Caco-2 (cell line): ENCODE measurements at regions of chr12 and their contacts with region 1.

Region 1: DNA sequence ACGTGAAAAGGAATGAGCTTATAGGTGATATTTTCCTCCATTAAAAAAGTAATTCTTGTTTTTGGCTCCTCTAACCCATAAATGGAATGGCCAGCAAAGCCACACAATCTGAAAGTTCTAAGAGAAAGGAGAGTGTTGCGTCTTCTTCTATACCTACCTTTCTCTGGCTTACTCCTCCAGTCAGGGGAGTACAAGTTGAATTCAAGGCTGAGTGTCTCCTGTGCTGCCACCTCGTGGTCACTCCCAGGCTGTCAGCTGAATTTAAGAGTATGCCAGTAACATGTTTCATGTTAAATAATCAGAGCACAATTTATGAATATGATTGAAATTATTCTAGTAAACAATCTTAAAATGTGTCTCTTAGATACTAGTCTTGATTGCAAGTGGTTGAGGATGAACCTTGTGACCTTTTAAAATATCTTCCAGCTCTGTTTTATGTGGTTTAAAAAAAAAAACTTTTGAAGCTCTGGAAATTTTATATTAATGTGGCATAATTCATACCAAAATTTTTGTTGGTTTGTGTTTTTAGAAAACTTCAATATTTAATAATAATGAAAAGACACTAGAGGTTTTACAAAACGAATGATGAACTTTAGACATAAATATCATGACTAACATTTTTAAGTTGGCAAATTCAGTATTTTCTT is 31.7 kb downstream of the PTHLH start:
- DNase-seq: peak; percentile 83 to 87
- H3K4me3 ChIP-seq: no peak overlapping the region
- H3K4me3 Mint-ChIP-seq: no peak overlapping the region
- H3K27ac Mint-ChIP-seq: no peak overlapping the region
- H3K4me1 ChIP-seq: no peaks in the 10 kb centered on the region
- H3K4me1 Mint-ChIP-seq: no peaks in the 10 kb centered on the region
- H3K27me3 ChIP-seq: no peaks in the 10 kb centered on the region
- H3K27me3 Mint-ChIP-seq: peaks cover 4% of the 10 kb centered on the region
- CTCF ChIP-seq: peak; percentile 93 to 95

Region 2: GRCh38 chr12:27779920-27780611 is 160.8 kb before region 1 on chr12 and contains the starts of genes KLHL42 and MANSC4:
- CTCF ChIA-PET with region 1: interaction called, 3 read pairs
- POLR2A ChIA-PET with region 1: no interaction called
- intact Hi-C with region 1: loop called (anchors 2 kb)
- DNase-seq: peak; percentile 78 to 87
- H3K4me3 ChIP-seq: peak within 1 kb of the TSS; percentile 95
- H3K4me3 Mint-ChIP-seq: peak within 1 kb of the TSS; percentile 83
- H3K27ac Mint-ChIP-seq: peak within 1 kb of the TSS; percentile 86
- H3K4me1 ChIP-seq: 0 out of 2 replicates have a peak, but pooled peaks cover 3% of the 10 kb centered on the region
- H3K4me1 Mint-ChIP-seq: peaks cover 26% of the 10 kb centered on the region
- H3K27me3 ChIP-seq: no peaks in the 10 kb centered on the region
- H3K27me3 Mint-ChIP-seq: no peaks in the 10 kb centered on the region
- CTCF ChIP-seq: no peak
- total RNA-seq, gene KLHL42: 36.5 and 38.1 TPM in 2 replicates
- total RNA-seq, gene MANSC4: not detected in 2 replicates

Region 3: GRCh38 chr12:27821259-27821973 is 119.5 kb before region 1 on chr12:
- CTCF ChIA-PET with region 1: no interaction called
- POLR2A ChIA-PET with region 1: no interaction called
- intact Hi-C with region 1: loop called (anchors 1 kb)
- DNase-seq: peak in 1 of 2 experiments; percentile 82
- H3K4me3 ChIP-seq: no peak overlapping the region
- H3K4me3 Mint-ChIP-seq: no peak overlapping the region
- H3K27ac Mint-ChIP-seq: no peak overlapping the region
- H3K4me1 ChIP-seq: no peaks in the 10 kb centered on the region; the same call in none of the 2 replicates
- H3K4me1 Mint-ChIP-seq: peaks cover 4% of the 10 kb centered on the region
- H3K27me3 ChIP-seq: no peaks in the 10 kb centered on the region
- H3K27me3 Mint-ChIP-seq: no peaks in the 10 kb centered on the region
- CTCF ChIP-seq: peak; percentile 74 to 89

Region 4: DNA sequence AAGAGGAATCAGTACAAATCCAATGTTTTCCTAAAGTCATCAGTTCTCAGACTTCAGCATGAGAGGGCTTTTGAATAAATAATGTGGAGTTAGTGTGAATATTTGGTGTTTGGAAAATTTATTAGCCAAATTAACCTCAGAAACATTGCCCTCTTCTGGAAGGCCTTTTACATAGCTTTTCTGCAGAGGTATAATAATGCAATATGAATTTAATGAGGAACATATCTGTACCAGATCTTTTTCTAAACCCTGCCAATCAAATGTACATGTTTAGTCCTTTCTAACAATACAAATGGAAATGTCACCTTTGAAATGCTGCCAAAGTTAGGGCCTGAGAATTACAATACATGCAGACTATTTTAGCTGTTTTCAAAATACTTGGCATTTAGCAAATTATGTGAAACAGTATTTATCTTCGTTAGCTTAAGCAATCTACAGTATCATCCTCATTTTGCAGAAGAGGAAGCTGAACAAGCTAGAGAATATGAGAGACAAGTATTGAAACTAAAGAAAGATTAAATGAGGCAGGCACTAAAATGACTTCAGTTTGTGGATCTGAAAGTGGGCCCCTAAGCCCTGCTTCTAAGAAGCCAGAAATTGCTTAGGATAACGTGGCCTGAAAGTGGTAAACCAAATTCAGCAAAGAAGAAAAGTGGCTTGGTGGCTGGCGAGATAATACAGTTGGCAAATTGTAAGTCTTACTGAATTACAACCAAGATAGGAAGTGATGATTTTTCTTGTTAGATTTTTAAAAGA is 100.5 kb before region 1 on chr12:
- CTCF ChIA-PET with region 1: no interaction called
- POLR2A ChIA-PET with region 1: no interaction called
- intact Hi-C with region 1: loop called (anchors 2 kb)
- DNase-seq: no peak
- H3K4me3 ChIP-seq: no peak overlapping the region
- H3K4me3 Mint-ChIP-seq: no peak overlapping the region
- H3K27ac Mint-ChIP-seq: no peak overlapping the region
- H3K4me1 ChIP-seq: peaks cover 35% of the 10 kb centered on the region
- H3K4me1 Mint-ChIP-seq: peaks cover 35% of the 10 kb centered on the region
- H3K27me3 ChIP-seq: no peaks in the 10 kb centered on the region
- H3K27me3 Mint-ChIP-seq: no peaks in the 10 kb centered on the region
- CTCF ChIP-seq: no peak

Region 5: DNA sequence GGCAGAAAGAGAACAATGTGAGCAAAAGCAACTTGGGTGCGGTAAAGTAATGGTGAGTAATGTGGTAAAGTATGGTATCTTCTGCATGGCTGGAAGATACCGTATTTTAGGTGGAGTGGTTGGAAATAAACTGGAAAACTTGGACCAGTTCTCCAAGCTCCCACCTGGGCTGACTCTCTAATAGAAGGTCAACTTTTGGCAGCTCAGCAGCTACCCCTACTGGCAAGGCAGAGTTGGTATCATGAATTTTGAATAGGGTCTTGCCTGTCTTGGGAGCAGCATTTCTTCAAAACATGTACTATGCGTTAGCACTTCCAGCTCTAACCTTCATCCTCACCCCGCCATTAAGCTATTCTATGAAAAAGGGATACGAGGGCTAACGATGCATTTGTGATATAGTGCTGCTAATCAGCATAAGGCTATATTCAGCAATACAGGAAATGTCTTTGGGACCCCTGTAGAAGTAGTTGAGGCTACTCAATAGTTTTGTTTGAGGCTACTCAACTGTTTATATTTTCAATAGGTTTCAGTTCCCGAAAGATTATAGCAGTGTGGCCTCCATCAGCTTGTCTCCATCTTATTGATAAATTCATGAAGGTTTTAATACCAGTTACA is 931.9 kb after region 1 on chr12:
- CTCF ChIA-PET with region 1: no interaction called
- POLR2A ChIA-PET with region 1: no interaction called
- intact Hi-C with region 1: loop called (anchors 1 kb)
- DNase-seq: peak; percentile 71 to 78
- H3K4me3 ChIP-seq: no peak overlapping the region
- H3K4me3 Mint-ChIP-seq: no peak overlapping the region
- H3K27ac Mint-ChIP-seq: no peak overlapping the region
- H3K4me1 ChIP-seq: no peaks in the 10 kb centered on the region
- H3K4me1 Mint-ChIP-seq: no peaks in the 10 kb centered on the region
- H3K27me3 ChIP-seq: no peaks in the 10 kb centered on the region
- H3K27me3 Mint-ChIP-seq: peaks cover 12% of the 10 kb centered on the region
- CTCF ChIP-seq: peak; percentile 90 to 93